BJ (cell line): ENCODE measurements at regions of chr11 and their contacts with region 1.

Region 1: GRCh38 chr11:64448599-64449556 is 89.9 kb downstream of the RPS6KA4 start:
- DNase-seq: no peak
- H3K4me3 ChIP-seq: no peak overlapping the region; the same call in 1 of the 2 replicates
- H3K27me3 ChIP-seq: peaks cover 7% of the 10 kb centered on the region
- CTCF ChIP-seq: peak; percentile 96

Region 2: DNA sequence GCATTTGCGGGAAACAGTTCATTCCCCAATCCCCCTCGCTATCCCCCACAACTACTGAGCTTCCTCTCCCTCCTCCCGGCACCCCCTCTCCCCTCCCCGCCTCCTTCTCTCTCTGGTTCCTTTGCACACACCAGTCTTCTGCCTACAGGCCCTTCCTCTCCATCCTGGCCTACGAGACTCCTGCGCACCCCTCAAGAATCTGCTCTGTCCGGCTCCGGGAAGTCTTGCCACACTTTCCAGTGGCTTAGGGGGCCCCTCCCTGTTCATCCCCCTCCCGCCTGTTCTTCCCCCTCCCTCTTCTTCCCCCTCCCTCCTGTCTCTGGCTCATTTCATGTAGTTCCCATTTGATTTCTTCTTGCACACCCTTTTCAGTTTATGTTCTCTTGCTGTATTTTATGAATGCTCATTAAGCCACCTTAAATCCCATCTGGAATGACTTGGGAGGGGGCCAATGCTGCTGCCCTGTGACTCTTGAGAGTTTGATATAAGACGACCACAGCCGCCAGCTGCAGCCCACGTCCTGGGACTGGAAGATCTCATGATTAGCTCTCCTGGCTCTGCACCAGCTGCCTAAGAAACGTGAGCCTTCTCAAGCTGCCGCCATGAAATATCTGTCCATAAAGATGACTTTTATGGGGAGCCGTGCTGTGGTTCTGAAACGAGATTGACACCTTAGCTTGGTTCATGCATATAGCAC is 39.0 kb before region 1 on chr11:
- CTCF ChIA-PET with region 1: interaction called, 13 read pairs
- POLR2A ChIA-PET with region 1: no interaction called
- DNase-seq: no peak
- H3K4me3 ChIP-seq: no peak overlapping the region
- H3K27me3 ChIP-seq: peaks cover 10% of the 10 kb centered on the region
- CTCF ChIP-seq: no peak

Region 3: DNA sequence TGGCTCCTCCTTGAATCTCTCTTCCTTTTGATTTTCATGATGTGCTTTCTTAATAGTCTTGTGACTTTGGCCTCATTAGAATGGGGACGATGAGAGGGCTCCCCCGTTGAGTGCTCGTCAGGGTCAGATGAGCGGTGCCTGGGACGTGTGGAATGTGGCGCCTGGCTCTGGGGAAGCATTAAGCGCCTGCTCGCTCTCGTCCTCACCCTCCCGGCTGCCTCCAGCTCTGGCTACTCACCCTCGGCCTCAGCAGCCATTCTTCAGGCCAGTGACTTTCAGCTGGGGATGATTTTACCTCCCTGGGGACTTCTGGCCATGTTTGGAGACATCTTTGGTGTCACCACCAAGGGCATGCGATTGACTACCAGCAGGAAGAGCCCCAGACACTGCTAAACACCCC is 20.2 kb before region 1 on chr11:
- CTCF ChIA-PET with region 1: interaction called, 80 read pairs
- POLR2A ChIA-PET with region 1: no interaction called
- DNase-seq: no peak
- H3K4me3 ChIP-seq: no peak overlapping the region
- H3K27me3 ChIP-seq: peaks cover 4% of the 10 kb centered on the region
- CTCF ChIP-seq: no peak

Region 4: GRCh38 chr11:64458997-64459396 is 10.1 kb after region 1 on chr11:
- CTCF ChIA-PET with region 1: interaction called, 27 read pairs
- POLR2A ChIA-PET with region 1: no interaction called
- DNase-seq: no peak
- H3K4me3 ChIP-seq: no peak overlapping the region
- H3K27me3 ChIP-seq: peaks cover 5% of the 10 kb centered on the region
- CTCF ChIP-seq: no peak

Region 5: GRCh38 chr11:64652586-64653387 is 203.9 kb after region 1 on chr11:
- CTCF ChIA-PET with region 1: interaction called, 67 read pairs
- POLR2A ChIA-PET with region 1: no interaction called
- DNase-seq: no peak
- H3K4me3 ChIP-seq: no peak overlapping the region
- H3K27me3 ChIP-seq: peaks cover 5% of the 10 kb centered on the region; the same call in 1 of the 2 replicates
- CTCF ChIP-seq: peak; percentile 92